Right ventricle myocardium inferior (tissue), 1 donor: ENCODE measurements at regions of chr5 and their contacts with region 1.

Region 1: GRCh38 chr5:159515909-159516415 is 185.7 kb upstream of the IL12B start:
- DNase-seq: peak; percentile 76
- ATAC-seq: peak; percentile 62

Region 2: GRCh38 chr5:159240301-159240870 is 275.6 kb before region 1 on chr5:
- intact Hi-C with region 1: no loop called
- DNase-seq: no peak
- ATAC-seq: no peak

Region 3: GRCh38 chr5:159642379-159642778 is 126.4 kb after region 1 on chr5:
- intact Hi-C with region 1: loop called (anchors 10 kb)
- DNase-seq: no peak
- ATAC-seq: no peak

Region 4: GRCh38 chr5:159773062-159773924 is 257.3 kb after region 1 on chr5:
- intact Hi-C with region 1: loop called (anchors 10 kb)
- DNase-seq: peak; percentile 88
- ATAC-seq: peak; percentile 96

Region 5: GRCh38 chr5:159965031-159965837 is 449.3 kb after region 1 on chr5:
- intact Hi-C with region 1: loop called (anchors 2 kb)
- DNase-seq: no peak
- ATAC-seq: peak; percentile 87